Dendritic cell treated with granulocyte-macrophage colony-stimulating factor and Interleukin-4, amounts not matched to agents 40 ng/mL and 50 ng/mL, for 4 days (primary cell): ENCODE measurements at regions of chr14 and their contacts with region 1.

Region 1: GRCh38 chr14:97077253-97077653 is 280.1 kb downstream of the VRK1 start:
- H3K4me3 Mint-ChIP-seq: no peak overlapping the region
- H3K27ac Mint-ChIP-seq: peak overlapping the region; percentile 64
- H3K4me1 Mint-ChIP-seq: peaks cover 68% of the 10 kb centered on the region
- H3K27me3 Mint-ChIP-seq: peaks cover 39% of the 10 kb centered on the region

Region 2: GRCh38 chr14:97138801-97139200 is 61.5 kb after region 1 on chr14:
- intact Hi-C with region 1: no loop called
- H3K4me3 Mint-ChIP-seq: no peak overlapping the region
- H3K27ac Mint-ChIP-seq: no peak overlapping the region
- H3K4me1 Mint-ChIP-seq: no peaks in the 10 kb centered on the region
- H3K27me3 Mint-ChIP-seq: no peaks in the 10 kb centered on the region

Region 3: DNA sequence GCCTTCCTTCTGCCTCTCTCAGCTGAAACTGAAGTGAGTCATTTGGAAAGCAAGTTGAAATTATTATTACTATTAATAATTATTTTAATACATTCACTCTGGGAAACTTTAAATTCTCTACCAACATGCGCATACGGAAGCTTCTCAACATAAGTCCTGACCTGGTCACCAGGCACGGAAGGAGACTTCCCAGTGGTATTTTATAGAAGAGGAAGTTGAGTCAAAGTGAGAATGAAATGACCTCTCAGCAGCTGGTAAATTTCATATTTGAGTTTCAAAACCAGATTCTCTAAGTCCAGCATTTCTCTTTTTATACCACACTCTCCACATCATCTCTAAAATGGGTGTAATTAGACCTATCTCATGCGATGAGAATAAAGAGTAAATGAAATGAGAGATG is 467.3 kb after region 1 on chr14:
- intact Hi-C with region 1: loop called (anchors 10 kb)
- H3K4me3 Mint-ChIP-seq: peak overlapping the region; percentile 49
- H3K27ac Mint-ChIP-seq: peak overlapping the region; percentile 88
- H3K4me1 Mint-ChIP-seq: peaks cover 54% of the 10 kb centered on the region
- H3K27me3 Mint-ChIP-seq: peaks cover 23% of the 10 kb centered on the region